HEK293 (cell line): ENCODE measurements at regions of chr2 and their contacts with region 1.

Region 1: DNA sequence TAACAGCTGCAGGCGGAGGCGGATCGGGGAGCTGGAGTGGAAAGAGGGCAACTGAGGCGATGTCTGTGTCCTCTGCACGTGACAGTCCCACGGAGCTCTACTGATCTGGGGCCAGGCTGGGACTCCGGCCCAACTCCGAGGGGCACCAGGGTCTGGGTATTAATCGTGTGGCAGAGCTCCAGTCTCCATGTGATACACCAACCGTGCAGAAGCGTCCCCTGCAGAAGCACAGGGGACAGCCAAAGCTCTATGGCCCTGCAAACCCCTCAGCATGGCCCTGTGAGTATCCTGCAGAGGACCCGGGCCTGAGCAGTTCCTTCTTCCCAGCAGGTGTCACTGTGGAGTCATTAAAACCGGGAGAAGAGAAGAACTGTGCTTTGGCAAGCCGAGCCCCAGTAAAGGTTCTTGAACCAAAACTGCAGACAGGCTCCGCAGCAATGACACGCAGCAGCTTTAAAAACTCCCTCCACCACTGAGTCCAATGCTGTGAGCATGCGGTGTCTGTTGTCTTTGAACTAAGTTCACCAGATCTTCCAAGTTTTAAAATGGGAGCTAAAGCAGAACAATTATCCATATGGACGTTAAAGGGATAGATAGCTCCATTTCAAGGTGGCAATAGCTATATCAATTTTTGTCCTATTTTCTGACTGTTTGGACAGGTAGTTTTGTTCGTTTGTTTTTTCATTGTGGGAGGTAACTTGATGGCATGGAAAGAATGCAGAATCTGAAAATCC is 79.4 kb downstream of the TMEM182 start:
- H3K4me3 ChIP-seq: no peak overlapping the region
- H3K27ac ChIP-seq: no peak overlapping the region
- H3K4me1 ChIP-seq: 0 out of 2 replicates have a peak, but pooled peaks cover 2% of the 10 kb centered on the region
- CTCF ChIP-seq: peak; percentile 32; the same call in 1 of the 2 replicates

Region 2: GRCh38 chr2:102826904-102827303 is 14.4 kb before region 1 on chr2:
- CTCF ChIA-PET with region 1: interaction called, 26 read pairs
- POLR2A ChIA-PET with region 1: no interaction called
- H3K4me3 ChIP-seq: no peak overlapping the region
- H3K27ac ChIP-seq: no peak overlapping the region
- H3K4me1 ChIP-seq: peaks cover 9% of the 10 kb centered on the region; the same call in 1 of the 2 replicates
- CTCF ChIP-seq: no peak

Region 3: DNA sequence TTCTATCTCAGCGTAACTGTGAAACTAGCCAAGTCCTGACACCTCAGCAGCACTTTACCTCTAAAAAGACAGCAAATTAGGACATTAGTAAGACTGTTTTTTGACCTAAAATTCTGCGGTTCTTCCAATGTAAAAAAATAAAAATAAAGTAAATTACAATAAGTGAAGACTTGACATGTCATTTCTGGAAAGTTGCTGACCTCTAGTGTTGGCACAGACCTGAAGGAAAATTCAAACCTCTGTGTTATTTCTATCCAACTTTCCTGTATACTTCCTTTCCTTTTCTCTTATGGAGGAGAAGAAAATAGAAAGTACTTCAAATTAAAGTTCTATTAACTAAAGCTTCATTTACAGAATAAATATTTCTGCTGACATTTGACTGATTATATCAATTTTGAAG is 31.1 kb after region 1 on chr2:
- CTCF ChIA-PET with region 1: interaction called, 42 read pairs
- POLR2A ChIA-PET with region 1: no interaction called
- H3K4me3 ChIP-seq: no peak overlapping the region
- H3K27ac ChIP-seq: no peak overlapping the region
- H3K4me1 ChIP-seq: no peaks in the 10 kb centered on the region
- CTCF ChIP-seq: no peak